PC-9 (cell line): ENCODE measurements at regions of chr11 and their contacts with region 1.

Region 1: GRCh38 chr11:57680552-57680874 is 12.6 kb downstream of the ZDHHC5 start:
- DNase-seq: peak; percentile 48 to 89
- H3K4me3 ChIP-seq: no peak overlapping the region; the same call in 1 of the 2 replicates
- H3K27ac ChIP-seq: peak overlapping the region; percentile 81
- H3K4me1 ChIP-seq: peaks cover 35% of the 10 kb centered on the region
- H3K27me3 ChIP-seq: no peaks in the 10 kb centered on the region
- CTCF ChIP-seq: no peak

Region 2: DNA sequence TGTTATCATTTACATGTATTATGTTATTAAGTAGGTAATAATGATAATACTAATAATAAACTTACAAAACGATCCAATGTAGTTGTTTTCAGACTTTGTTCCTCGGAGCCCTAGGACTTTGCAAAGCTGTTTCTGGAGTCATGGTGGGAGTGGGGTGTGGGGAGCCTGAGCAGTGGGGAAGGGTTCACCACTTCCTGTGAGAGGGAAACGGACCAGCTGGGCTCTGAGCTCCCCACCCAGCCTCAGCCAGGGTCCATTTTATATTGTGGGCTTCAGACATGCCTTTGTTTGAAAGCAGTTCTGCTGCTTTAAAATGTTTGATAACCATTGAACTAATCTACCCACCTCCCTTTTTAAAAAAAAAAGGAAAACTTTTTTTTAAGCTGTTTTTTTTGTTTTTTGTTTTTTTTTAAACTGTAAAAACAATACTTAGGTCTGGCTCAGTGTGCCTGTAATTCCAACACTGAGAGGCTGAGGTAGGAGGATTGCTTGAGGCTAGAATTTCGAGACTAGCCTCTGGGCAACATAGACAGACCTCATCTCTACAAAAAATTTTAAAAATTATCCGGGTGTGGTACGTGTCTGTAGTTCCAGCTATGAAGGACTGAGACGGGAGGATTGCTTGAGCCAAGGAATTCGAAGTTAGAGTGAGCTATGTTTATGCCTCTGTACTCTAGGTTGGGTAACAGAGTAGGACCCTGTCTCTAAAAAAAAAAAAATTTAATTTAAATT is 76.1 kb before region 1 on chr11:
- CTCF ChIA-PET with region 1: no interaction called
- POLR2A ChIA-PET with region 1: interaction called, 10 read pairs
- intact Hi-C with region 1: no loop called
- DNase-seq: no peak
- H3K4me3 ChIP-seq: no peak overlapping the region
- H3K27ac ChIP-seq: no peak overlapping the region
- H3K4me1 ChIP-seq: no peaks in the 10 kb centered on the region
- H3K27me3 ChIP-seq: peaks cover 51% of the 10 kb centered on the region
- CTCF ChIP-seq: no peak

Region 3: DNA sequence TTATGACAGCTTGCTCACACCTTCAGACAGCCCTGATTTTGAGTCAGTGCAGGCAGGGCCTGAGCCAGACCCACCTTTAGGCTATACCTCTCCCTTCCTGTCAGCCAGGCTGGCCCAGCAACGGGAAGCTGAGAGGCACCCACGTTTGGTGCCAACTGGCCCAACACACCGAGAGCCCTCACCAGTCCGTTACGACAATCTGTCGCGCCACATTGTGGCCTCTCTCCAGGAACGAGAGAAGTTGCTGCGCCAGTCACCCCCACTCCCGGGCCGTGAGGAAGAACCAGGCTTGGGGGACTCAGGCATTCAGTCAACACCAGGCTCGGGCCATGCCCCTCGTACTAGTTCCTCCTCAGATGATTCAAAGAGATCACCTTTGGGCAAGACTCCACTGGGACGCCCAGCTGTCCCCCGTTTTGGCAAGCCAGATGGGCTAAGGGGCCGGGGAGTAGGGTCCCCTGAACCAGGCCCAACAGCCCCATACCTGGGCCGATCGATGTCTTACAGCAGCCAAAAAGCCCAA is 18.4 kb after region 1 on chr11:
- CTCF ChIA-PET with region 1: no interaction called
- POLR2A ChIA-PET with region 1: no interaction called
- intact Hi-C with region 1: no loop called
- DNase-seq: no peak
- H3K4me3 ChIP-seq: no peak overlapping the region
- H3K27ac ChIP-seq: no peak overlapping the region
- H3K4me1 ChIP-seq: no peaks in the 10 kb centered on the region
- H3K27me3 ChIP-seq: no peaks in the 10 kb centered on the region
- CTCF ChIP-seq: no peak

Region 4: DNA sequence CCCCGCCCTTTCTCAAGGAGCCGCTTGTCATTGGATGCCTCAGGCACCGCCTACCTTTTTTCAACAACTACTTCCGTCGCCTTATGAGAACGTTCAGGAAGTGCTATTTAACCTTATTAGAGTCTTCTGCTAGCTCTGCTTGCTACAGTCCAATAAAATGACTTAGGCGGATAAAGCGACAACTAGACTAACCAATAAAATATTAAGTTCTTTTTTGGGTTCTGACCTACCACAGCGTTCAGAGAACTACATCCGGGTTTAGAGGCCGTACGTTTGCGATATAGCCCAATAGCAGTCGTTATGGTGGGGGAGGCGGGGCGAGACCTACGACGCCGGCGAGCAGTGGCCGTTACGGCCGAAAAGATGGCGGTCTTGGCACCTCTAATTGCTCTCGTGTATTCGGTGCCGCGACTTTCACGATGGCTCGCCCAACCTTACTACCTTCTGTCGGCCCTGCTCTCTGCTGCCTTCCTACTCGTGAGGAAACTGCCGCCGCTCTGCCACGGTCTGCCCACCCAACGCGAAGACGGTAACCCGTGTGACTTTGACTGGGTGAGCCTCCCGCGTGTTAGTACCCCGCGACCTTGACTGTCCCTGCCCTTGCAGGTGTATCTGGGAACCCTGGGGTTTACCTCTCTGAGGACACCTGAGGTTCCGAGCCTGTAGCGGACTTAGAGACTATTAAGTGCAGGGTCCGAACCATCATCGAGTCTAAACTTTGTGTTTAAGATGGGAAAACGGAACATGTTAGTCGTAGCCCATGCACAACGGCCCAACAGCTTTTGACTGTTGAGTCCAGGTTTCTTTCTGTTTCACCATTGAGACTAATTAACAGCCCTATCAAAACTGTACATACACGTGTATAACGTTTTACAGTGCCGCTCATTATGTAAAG is 32.0 kb after region 1 on chr11 and contains the start of gene TMX2:
- CTCF ChIA-PET with region 1: no interaction called
- POLR2A ChIA-PET with region 1: no interaction called
- intact Hi-C with region 1: no loop called
- DNase-seq: peak; percentile 94 to 100
- H3K4me3 ChIP-seq: peak within 1 kb of the TSS; percentile 97
- H3K27ac ChIP-seq: peak within 1 kb of the TSS; percentile 75
- H3K4me1 ChIP-seq: peaks cover 25% of the 10 kb centered on the region
- H3K27me3 ChIP-seq: no peaks in the 10 kb centered on the region
- CTCF ChIP-seq: no peak
- total RNA-seq, gene TMX2: 124 and 138 TPM in 2 replicates

Region 5: GRCh38 chr11:57815476-57815875 is 135.0 kb after region 1 on chr11:
- CTCF ChIA-PET with region 1: no interaction called
- POLR2A ChIA-PET with region 1: no interaction called
- intact Hi-C with region 1: loop called (anchors 5 kb)
- DNase-seq: no peak
- H3K4me3 ChIP-seq: no peak overlapping the region
- H3K27ac ChIP-seq: no peak overlapping the region
- H3K4me1 ChIP-seq: no peaks in the 10 kb centered on the region
- H3K27me3 ChIP-seq: no peaks in the 10 kb centered on the region
- CTCF ChIP-seq: no peak

Region 6: DNA sequence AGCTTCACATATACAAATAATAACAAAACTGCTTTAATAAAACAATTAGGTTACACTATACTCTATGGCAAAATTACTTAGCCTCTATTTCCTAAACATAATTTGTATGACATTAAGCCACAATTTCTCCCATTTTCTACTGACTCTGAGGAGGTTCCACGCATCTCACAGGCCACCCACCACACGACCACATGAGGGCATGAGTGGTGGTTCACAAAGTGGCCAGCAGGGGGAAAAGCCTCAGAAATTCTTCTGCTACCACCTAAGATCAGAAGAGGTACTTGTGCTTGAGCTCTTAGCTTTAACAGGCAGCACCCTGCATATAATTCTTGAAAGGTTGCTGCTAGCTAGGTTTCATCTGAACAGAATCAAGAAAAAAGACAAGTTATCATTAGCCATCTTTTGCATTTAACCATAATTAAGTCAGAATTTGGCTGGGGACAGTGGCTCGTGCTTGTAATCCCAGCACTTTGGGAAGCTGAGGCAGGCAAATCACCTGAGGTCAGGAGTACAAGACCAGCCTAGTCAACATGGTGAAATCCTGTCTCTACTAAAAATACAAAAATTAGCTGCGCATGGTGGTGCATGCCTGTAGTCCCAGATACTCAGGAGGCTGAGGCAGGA is 887.5 kb after region 1 on chr11:
- CTCF ChIA-PET with region 1: no interaction called
- POLR2A ChIA-PET with region 1: no interaction called
- intact Hi-C with region 1: no loop called
- DNase-seq: peak in 1 of 2 experiments; percentile 52
- H3K4me3 ChIP-seq: no peak overlapping the region
- H3K27ac ChIP-seq: no peak overlapping the region
- H3K4me1 ChIP-seq: peaks cover 9% of the 10 kb centered on the region
- H3K27me3 ChIP-seq: no peaks in the 10 kb centered on the region
- CTCF ChIP-seq: peak; percentile 92